ACHN (cell line): ENCODE measurements at regions of chr7 and their contacts with region 1.

Region 1: GRCh38 chr7:120987683-120988590 is 574 bp upstream of the CPED1 start:
- DNase-seq: peak; percentile 96

Region 2: GRCh38 chr7:120233338-120233737 is 754.6 kb before region 1 on chr7:
- in situ Hi-C with region 1: no loop called
- DNase-seq: no peak

Region 3: DNA sequence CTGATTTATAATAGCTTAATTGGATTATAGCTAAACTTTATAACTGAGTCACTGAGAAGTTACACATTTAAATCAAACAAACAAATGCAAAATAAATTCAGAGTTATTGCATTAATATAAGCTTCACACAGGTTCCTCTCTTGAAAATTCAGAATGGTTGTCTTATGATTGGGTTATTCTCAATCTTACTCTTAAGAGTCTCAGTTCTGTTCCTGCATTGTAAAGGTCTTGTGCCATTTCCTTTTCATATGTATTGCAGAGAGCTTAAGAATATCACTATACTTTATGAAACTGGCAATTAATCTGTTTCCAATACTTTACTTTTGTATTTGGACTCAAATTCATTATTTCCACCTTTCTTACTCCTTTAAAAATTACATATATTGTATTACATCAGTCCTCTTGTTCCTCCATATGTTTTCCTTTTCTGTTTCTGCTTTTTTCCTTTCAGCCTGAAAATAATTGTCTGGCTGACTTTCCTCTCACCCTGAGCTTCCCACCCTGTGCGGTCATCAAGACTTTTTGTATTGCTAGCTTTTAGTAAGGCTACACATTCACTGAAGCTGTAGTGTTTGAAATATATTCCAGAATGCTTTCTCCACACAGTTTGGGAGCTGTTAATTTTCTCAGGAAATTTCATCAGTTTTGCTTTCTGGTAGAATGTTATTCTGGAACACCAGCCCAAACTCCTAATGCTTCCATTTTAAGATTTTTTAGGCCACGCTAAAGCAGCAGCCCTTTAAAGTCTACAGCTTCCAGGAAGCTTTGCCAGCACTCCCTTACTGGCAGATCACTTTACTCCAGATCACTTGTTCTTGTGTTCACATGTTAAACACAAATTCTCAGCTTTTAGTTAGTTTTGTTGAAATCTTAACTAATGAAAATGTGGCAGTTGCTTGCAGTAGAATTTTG is 575.5 kb before region 1 on chr7:
- in situ Hi-C with region 1: no loop called
- DNase-seq: no peak

Region 4: GRCh38 chr7:121081327-121081936 is 93.5 kb after region 1 on chr7:
- in situ Hi-C with region 1: loop called (anchors 25 kb)
- DNase-seq: peak; percentile 88

Region 5: GRCh38 chr7:121351679-121352078 is 363.7 kb after region 1 on chr7:
- in situ Hi-C with region 1: no loop called
- DNase-seq: no peak